GM10248 (cell line): ENCODE measurements at regions of chr9 and their contacts with region 1.

Region 1: GRCh38 chr9:76996700-76997099 is 22.8 kb upstream of the FOXB2 start:
- DNase-seq: peak; percentile 43
- CTCF ChIP-seq: peak; percentile 60

Region 2: DNA sequence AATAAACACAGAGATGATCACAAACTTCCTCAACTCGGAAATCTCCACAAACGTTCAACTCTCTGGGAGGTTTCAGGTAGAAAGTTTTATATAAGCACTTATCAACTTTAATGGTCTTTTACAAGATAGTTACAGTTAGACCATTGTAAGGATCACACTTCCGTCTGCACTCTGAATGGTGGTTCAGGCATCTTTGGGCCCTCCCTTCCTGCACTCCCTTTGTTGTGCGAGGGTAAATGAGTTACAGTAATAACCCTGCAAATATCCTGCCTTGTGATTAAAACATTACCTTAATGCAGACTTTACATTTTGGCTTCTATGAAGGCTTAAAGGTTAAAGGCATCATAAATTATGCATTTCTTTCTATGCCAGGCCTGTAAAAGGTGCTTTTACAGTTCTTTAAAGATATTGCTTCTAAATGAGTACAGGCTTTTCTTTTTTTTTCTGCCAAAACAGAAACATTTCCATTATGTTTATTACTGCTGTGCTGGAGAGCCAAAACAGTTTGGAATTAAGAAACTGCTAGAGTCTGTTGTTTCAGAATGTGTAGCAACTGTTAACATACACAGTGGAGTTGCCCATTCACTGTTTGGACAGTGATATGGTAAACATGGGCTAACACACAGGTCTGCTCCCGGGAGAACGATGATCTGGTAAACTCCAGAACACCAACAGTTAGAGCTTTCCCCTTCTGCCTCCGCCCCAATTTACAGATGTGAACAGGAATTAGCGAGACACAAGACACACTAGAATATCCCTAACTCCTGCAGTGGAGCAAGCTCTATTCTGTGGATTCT is 91.8 kb before region 1 on chr9:
- CTCF ChIA-PET with region 1: no interaction called
- POLR2A ChIA-PET with region 1: no interaction called
- DNase-seq: no peak
- CTCF ChIP-seq: no peak

Region 3: DNA sequence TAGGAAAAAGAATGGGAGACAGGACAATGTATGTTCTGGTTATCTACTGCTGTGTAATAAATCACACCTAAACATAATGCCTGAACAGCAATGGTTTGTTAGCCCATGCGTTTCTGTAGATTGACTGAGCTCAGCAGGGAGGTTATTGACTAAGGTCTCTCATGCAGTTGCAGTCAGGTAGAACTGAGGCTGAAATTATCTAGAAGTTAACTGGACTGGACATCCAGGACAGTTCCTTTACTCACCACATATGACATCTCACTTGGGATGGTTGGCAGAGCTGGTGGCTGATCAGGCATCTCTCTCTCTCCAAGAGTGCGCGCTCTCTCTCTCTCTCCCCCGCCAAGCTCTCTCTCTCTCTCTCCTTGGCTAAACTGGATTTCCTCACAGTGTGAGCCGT is 13.8 kb after region 1 on chr9:
- CTCF ChIA-PET with region 1: interaction called, 17 read pairs
- POLR2A ChIA-PET with region 1: no interaction called
- DNase-seq: no peak
- CTCF ChIP-seq: no peak

Region 4: GRCh38 chr9:77063645-77064285 is 67.1 kb after region 1 on chr9:
- CTCF ChIA-PET with region 1: no interaction called
- POLR2A ChIA-PET with region 1: no interaction called
- DNase-seq: no peak
- CTCF ChIP-seq: no peak